Activated CD4-positive, alpha-beta T cell treated with anti-CD3 and anti-CD28 coated beads for 36 hours (primary cell): ENCODE measurements at regions of chr19 and their contacts with region 1.

Region 1: DNA sequence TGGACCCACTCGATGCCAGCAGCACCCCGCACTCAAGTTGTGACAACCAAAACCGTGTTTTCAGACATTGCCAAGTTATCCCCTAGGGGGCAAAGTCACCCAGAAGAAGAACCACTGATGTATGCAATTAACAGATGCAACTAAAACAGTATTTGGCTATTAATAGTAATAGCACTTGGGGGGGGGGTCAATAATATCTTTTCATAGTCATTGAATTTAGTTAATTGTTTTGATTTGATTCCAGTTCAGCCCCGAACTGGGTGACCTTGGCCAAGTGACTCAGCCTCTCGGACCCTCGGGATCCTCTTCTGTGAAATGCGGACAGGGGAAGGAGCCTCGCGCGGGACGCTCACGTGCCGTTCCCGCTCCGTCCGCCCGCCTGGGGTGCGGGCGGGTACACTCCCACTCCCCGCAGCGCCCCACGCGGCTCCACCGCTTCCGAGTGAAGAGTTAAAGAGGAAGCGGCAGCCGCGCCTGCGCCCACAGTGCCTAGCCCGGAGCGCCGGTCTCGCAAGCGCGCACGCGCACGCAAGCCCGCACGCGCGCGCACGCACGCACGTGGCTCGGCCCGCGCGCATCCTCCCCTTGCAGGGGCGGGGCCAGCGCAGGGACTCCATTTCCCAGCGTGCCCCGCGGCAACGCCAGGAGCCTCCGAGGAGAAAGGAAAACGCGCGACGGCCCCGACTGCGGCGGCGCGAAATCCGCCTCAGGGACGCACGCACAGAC is 449 bp upstream of the DAZAP1 start:
- DNase-seq: peak; percentile 99
- ATAC-seq: peak; percentile 83
- H3K4me3 Mint-ChIP-seq: peak overlapping the region; percentile 65
- H3K27ac Mint-ChIP-seq: peak overlapping the region; percentile 72
- H3K4me1 Mint-ChIP-seq: peaks cover 43% of the 10 kb centered on the region
- H3K27me3 Mint-ChIP-seq: peaks cover 2% of the 10 kb centered on the region

Region 2: DNA sequence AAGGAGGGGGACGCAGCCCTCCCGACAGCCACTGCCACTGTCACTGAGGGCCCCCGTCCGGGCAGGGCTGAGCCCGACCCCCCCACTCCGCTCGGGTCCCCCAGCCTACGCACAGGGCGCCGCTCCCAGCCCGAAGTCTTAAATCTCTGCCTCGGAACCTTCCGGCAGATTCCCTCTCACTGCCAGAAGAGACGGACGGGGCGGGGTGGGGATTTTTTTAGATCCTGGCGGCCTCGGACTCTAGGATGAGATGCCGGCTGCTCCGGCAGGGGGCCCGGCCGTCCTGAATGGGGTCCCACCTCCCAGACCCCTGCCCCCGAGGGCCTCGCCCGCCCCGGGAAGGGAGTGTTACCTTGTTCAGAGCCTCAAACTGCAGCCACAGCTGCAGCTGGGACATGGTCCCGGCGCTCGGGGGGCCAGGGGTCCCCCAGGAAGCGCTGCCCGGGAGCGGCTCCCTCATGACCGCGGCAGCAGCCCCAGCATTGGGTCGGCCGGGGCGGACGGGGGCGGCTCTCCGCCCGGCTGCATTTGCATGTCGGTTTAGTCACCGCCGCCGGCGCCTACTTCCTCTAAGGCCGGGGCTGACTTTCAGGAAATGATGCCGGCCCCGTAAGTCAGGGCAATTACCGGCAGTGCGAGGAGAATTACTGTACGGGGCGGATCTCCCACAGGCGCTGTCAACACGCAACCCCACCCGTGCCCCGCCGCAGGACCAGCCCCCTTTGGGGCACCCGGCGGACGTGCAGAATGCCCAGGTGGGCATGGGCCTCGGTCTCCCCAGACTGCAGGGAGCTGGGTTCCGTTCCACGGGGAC is 275.0 kb before region 1 on chr19:
- CTCF ChIA-PET with region 1: no interaction called
- POLR2A ChIA-PET with region 1: no interaction called
- intact Hi-C with region 1: loop called in 1 of 2 experiments (anchors 1 kb)
- DNase-seq: peak; percentile 96
- ATAC-seq: peak; percentile 60
- H3K4me3 Mint-ChIP-seq: peak overlapping the region; percentile 91
- H3K27ac Mint-ChIP-seq: peak overlapping the region; percentile 96
- H3K4me1 Mint-ChIP-seq: peaks cover 46% of the 10 kb centered on the region
- H3K27me3 Mint-ChIP-seq: no peaks in the 10 kb centered on the region

Region 3: DNA sequence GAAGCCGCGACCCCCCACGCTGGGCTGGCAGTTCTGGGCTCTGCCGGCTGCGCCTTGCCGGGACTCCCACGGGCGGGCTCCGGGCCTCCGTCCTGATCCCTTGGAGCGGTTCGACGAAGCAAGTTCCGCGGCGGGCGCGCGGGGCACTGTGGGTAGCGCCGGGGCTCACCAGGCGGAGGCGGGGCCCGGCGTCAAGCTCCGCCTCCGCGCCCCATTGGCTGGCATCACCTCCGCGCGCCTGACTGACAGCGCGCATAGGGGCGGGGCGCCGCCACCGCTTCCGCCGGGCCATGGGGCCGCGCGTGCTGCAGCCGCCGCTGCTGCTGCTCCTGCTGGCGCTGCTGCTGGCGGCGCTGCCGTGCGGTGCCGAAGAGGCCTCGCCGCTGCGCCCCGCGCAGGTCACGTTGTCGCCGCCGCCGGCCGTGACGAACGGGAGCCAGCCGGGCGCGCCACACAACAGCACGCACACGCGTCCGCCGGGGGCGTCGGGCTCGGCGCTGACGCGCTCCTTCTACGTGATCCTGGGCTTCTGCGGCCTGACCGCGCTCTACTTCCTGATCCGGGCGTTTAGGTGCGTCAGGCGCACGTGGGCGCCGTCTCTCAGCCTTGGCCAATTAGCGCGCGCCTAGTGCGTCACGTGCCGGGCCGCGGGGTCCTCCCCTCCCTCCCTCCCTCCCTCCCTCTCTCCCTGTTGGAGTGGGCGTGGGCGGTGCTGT is 131.5 kb before region 1 on chr19 and contains the start of gene FAM174C:
- CTCF ChIA-PET with region 1: no interaction called
- POLR2A ChIA-PET with region 1: no interaction called
- intact Hi-C with region 1: loop called (anchors 1 to 5 kb)
- DNase-seq: peak; percentile 99
- ATAC-seq: peak; percentile 82
- H3K4me3 Mint-ChIP-seq: peak within 1 kb of the TSS; percentile 83
- H3K27ac Mint-ChIP-seq: peak within 1 kb of the TSS; percentile 95
- H3K4me1 Mint-ChIP-seq: peaks cover 54% of the 10 kb centered on the region
- H3K27me3 Mint-ChIP-seq: no peaks in the 10 kb centered on the region
- total RNA-seq, gene FAM174C: 75.3 to 88.3 TPM

Region 4: GRCh38 chr19:1438035-1438932 is 31.3 kb after region 1 on chr19 and contains the start of gene RPS15:
- CTCF ChIA-PET with region 1: interaction called, 4 read pairs
- POLR2A ChIA-PET with region 1: interaction called, 7 read pairs
- intact Hi-C with region 1: loop called (anchors 1 to 2 kb)
- DNase-seq: peak; percentile 98
- ATAC-seq: peak; percentile 86
- H3K4me3 Mint-ChIP-seq: peak within 1 kb of the TSS; percentile 94
- H3K27ac Mint-ChIP-seq: peak within 1 kb of the TSS; percentile 99
- H3K4me1 Mint-ChIP-seq: peaks cover 34% of the 10 kb centered on the region
- H3K27me3 Mint-ChIP-seq: no peaks in the 10 kb centered on the region
- total RNA-seq, gene RPS15: 1,716 to 1,858 TPM

Region 5: GRCh38 chr19:1592755-1593500 is 186.0 kb after region 1 on chr19 and contains the start of gene MBD3:
- CTCF ChIA-PET with region 1: no interaction called
- POLR2A ChIA-PET with region 1: no interaction called
- intact Hi-C with region 1: loop called in 1 of 2 experiments (anchors 1 kb)
- DNase-seq: peak; percentile 93
- ATAC-seq: peak; percentile 85
- H3K4me3 Mint-ChIP-seq: peak within 1 kb of the TSS; percentile 94
- H3K27ac Mint-ChIP-seq: peak within 1 kb of the TSS; percentile 93
- H3K4me1 Mint-ChIP-seq: peaks cover 20% of the 10 kb centered on the region
- H3K27me3 Mint-ChIP-seq: no peaks in the 10 kb centered on the region
- total RNA-seq, gene MBD3: 68.9 to 87.5 TPM

Region 6: GRCh38 chr19:1715540-1715939 is 308.6 kb after region 1 on chr19:
- CTCF ChIA-PET with region 1: no interaction called
- POLR2A ChIA-PET with region 1: no interaction called
- intact Hi-C with region 1: no loop called
- DNase-seq: no peak
- ATAC-seq: no peak
- H3K4me3 Mint-ChIP-seq: no peak overlapping the region
- H3K27ac Mint-ChIP-seq: no peak overlapping the region
- H3K4me1 Mint-ChIP-seq: no peaks in the 10 kb centered on the region
- H3K27me3 Mint-ChIP-seq: peaks cover 35% of the 10 kb centered on the region

Region 7: DNA sequence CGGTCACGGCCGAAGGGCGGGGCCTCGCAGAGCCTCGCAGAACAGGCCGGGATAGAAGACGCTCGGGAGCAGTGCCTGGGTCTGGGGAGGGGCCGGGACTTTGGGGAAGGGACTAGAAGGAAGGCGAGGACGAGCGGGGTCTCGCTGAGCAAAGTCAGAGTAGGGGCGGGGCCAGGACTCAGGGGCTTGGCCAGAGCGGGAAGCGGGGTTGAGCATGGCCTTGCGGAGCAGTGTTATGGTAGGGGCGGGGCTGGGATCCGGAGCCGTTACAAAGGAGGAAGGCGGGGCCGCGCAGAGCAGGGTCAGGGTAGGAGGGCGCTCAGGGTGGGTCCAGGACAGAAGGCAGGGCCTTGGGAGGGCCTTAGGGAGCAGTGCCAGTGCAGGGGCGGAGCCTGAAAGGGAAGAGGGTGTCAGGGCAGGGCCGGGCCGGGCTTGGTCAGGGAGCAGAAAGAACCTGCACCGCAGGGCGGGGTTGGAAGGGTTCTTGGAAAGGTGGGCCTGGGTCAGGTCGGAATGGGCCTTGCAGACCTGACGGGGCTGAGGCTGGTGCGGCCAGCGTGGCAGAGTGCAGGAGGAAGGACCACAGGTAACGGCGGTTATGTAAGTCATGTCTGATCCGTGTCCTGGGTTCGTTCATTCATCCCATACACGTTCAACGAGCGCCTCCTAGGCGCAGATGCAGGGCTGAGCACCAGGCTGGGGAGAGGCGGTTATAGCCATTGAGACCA is 405.7 kb after region 1 on chr19:
- CTCF ChIA-PET with region 1: no interaction called
- POLR2A ChIA-PET with region 1: no interaction called
- intact Hi-C with region 1: loop called in 1 of 2 experiments (anchors 1 kb)
- DNase-seq: peak; percentile 94
- ATAC-seq: peak; percentile 90
- H3K4me3 Mint-ChIP-seq: peak overlapping the region; percentile 77
- H3K27ac Mint-ChIP-seq: peak overlapping the region; percentile 90
- H3K4me1 Mint-ChIP-seq: peaks cover 14% of the 10 kb centered on the region
- H3K27me3 Mint-ChIP-seq: no peaks in the 10 kb centered on the region